BJ (cell line): ENCODE measurements at regions of chr15 and their contacts with region 1.

Region 1: DNA sequence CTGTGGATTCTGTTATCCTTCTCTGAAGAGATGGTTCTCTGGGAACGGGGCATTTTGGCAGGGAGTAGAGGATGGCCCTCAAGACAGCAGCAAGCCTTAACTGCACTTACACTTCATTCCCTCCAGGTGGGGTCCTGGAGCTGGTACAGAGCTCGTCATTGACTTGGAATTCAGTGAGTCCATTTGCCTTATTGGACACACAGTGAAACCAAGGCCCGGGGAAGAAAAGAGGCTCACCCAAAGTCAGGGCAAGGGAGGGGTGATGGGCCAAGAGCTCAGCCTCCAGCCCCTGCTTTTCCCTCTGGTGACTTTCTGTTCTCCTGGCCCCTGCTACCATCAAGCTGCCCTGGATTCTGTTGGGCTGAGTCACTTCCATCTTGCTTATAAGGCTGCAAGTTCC is 125.6 kb downstream of the ETFA start:
- DNase-seq: peak; percentile 49
- H3K4me3 ChIP-seq: no peak overlapping the region
- H3K27me3 ChIP-seq: no peaks in the 10 kb centered on the region
- CTCF ChIP-seq: peak; percentile 67

Region 2: GRCh38 chr15:76169013-76169412 is 16.7 kb before region 1 on chr15:
- CTCF ChIA-PET with region 1: interaction called, 11 read pairs
- POLR2A ChIA-PET with region 1: no interaction called
- DNase-seq: no peak
- H3K4me3 ChIP-seq: no peak overlapping the region
- H3K27me3 ChIP-seq: no peaks in the 10 kb centered on the region
- CTCF ChIP-seq: no peak